CD4-positive, alpha-beta T cell (primary cell): ENCODE measurements at regions of chr4 and their contacts with region 1.

Region 1: GRCh38 chr4:98995183-98996055 is at the start of gene METAP1:
- DNase-seq: peak; percentile 92 to 99 (median 96)
- ATAC-seq: peak; percentile 85
- H3K4me3 ChIP-seq: peak within 1 kb of the TSS; percentile 90
- H3K4me3 Mint-ChIP-seq: peak within 1 kb of the TSS; percentile 93
- H3K27ac ChIP-seq: peak within 1 kb of the TSS; percentile 81 to 89
- H3K27ac Mint-ChIP-seq: peak within 1 kb of the TSS; percentile 99
- H3K4me1 ChIP-seq: peaks cover 23% of the 10 kb centered on the region
- H3K4me1 Mint-ChIP-seq: peaks cover 35% of the 10 kb centered on the region
- H3K27me3 ChIP-seq: no peaks in the 10 kb centered on the region
- H3K27me3 Mint-ChIP-seq: no peaks in the 10 kb centered on the region
- CTCF ChIP-seq: peak; percentile 73
- total RNA-seq, gene METAP1: 25.1 to 26.6 TPM

Region 2: GRCh38 chr4:98143001-98143899 is 852.2 kb before region 1 on chr4 and contains the start of gene STPG2:
- CTCF ChIA-PET with region 1: interaction called, 8 read pairs
- POLR2A ChIA-PET with region 1: interaction called, 18 read pairs
- intact Hi-C with region 1: loop called in 1 of 2 experiments (anchors 5 kb)
- DNase-seq: peak; percentile 85 to 97 (median 94)
- ATAC-seq: peak; percentile 98
- H3K4me3 ChIP-seq: peak within 1 kb of the TSS; percentile 88
- H3K4me3 Mint-ChIP-seq: peak within 1 kb of the TSS; percentile 90
- H3K27ac ChIP-seq: peak within 1 kb of the TSS; percentile 75 to 96
- H3K27ac Mint-ChIP-seq: peak within 1 kb of the TSS; percentile 93
- H3K4me1 ChIP-seq: peaks cover 17% of the 10 kb centered on the region
- H3K4me1 Mint-ChIP-seq: peaks cover 21% of the 10 kb centered on the region
- H3K27me3 ChIP-seq: no peaks in the 10 kb centered on the region
- H3K27me3 Mint-ChIP-seq: no peaks in the 10 kb centered on the region
- CTCF ChIP-seq: peak; percentile 73
- total RNA-seq, gene STPG2: 0.22 to 0.28 TPM

Region 3: GRCh38 chr4:98658287-98659105 is 336.9 kb before region 1 on chr4 and contains the start of gene TSPAN5:
- CTCF ChIA-PET with region 1: interaction called, 8 read pairs
- POLR2A ChIA-PET with region 1: interaction called, 8 read pairs
- intact Hi-C with region 1: loop called (anchors 2 to 5 kb)
- DNase-seq: peak; percentile 56 to 93 (median 84)
- ATAC-seq: peak; percentile 67
- H3K4me3 ChIP-seq: peak within 1 kb of the TSS; percentile 89
- H3K4me3 Mint-ChIP-seq: peak within 1 kb of the TSS; percentile 89
- H3K27ac ChIP-seq: peak within 1 kb of the TSS in 1 of 2 donors; percentile 39
- H3K27ac Mint-ChIP-seq: peak within 1 kb of the TSS; percentile 98
- H3K4me1 ChIP-seq: peaks cover 50% of the 10 kb centered on the region
- H3K4me1 Mint-ChIP-seq: peaks cover 87% of the 10 kb centered on the region
- H3K27me3 ChIP-seq: no peaks in the 10 kb centered on the region
- H3K27me3 Mint-ChIP-seq: no peaks in the 10 kb centered on the region
- CTCF ChIP-seq: no peak
- total RNA-seq, gene TSPAN5: 1.8 to 2.8 TPM

Region 4: GRCh38 chr4:99024481-99025275 is 29.3 kb after region 1 on chr4:
- CTCF ChIA-PET with region 1: interaction called, 11 read pairs
- POLR2A ChIA-PET with region 1: interaction called, 7 read pairs
- intact Hi-C with region 1: no loop called
- DNase-seq: peak in 3 of 14 experiments; percentile 9 to 16 (median 14)
- ATAC-seq: no peak
- H3K4me3 ChIP-seq: no peak overlapping the region
- H3K4me3 Mint-ChIP-seq: no peak overlapping the region
- H3K27ac ChIP-seq: no peak overlapping the region
- H3K27ac Mint-ChIP-seq: peak overlapping the region; percentile 54
- H3K4me1 ChIP-seq: peaks cover 23% of the 10 kb centered on the region
- H3K4me1 Mint-ChIP-seq: peaks cover 85% of the 10 kb centered on the region
- H3K27me3 ChIP-seq: no peaks in the 10 kb centered on the region
- H3K27me3 Mint-ChIP-seq: no peaks in the 10 kb centered on the region
- CTCF ChIP-seq: no peak

Region 5: GRCh38 chr4:99054428-99054994 is 59.1 kb after region 1 on chr4:
- CTCF ChIA-PET with region 1: interaction called, 140 read pairs
- POLR2A ChIA-PET with region 1: interaction called, 82 read pairs
- intact Hi-C with region 1: loop called (anchors 1 kb)
- DNase-seq: no peak
- ATAC-seq: no peak
- H3K4me3 ChIP-seq: no peak overlapping the region
- H3K4me3 Mint-ChIP-seq: no peak overlapping the region
- H3K27ac ChIP-seq: no peak overlapping the region
- H3K27ac Mint-ChIP-seq: peak overlapping the region; percentile 10
- H3K4me1 ChIP-seq: peaks cover 5% of the 10 kb centered on the region
- H3K4me1 Mint-ChIP-seq: peaks cover 12% of the 10 kb centered on the region
- H3K27me3 ChIP-seq: no peaks in the 10 kb centered on the region
- H3K27me3 Mint-ChIP-seq: no peaks in the 10 kb centered on the region
- CTCF ChIP-seq: no peak

Region 6: GRCh38 chr4:99088481-99089365 is 93.3 kb after region 1 on chr4 and contains the start of gene ADH5:
- CTCF ChIA-PET with region 1: interaction called, 26 read pairs
- POLR2A ChIA-PET with region 1: interaction called, 79 read pairs
- intact Hi-C with region 1: loop called (anchors 1 to 2 kb)
- DNase-seq: peak; percentile 86 to 96 (median 91)
- ATAC-seq: peak; percentile 95
- H3K4me3 ChIP-seq: peak within 1 kb of the TSS; percentile 93
- H3K4me3 Mint-ChIP-seq: peak within 1 kb of the TSS; percentile 95
- H3K27ac ChIP-seq: peak within 1 kb of the TSS; percentile 76 to 82
- H3K27ac Mint-ChIP-seq: peak within 1 kb of the TSS; percentile 93
- H3K4me1 ChIP-seq: peaks cover 25% of the 10 kb centered on the region
- H3K4me1 Mint-ChIP-seq: peaks cover 65% of the 10 kb centered on the region
- H3K27me3 ChIP-seq: no peaks in the 10 kb centered on the region
- H3K27me3 Mint-ChIP-seq: no peaks in the 10 kb centered on the region
- CTCF ChIP-seq: no peak
- total RNA-seq, gene ADH5: 49.1 to 52.0 TPM

Region 7: GRCh38 chr4:99120501-99120900 is 125.1 kb after region 1 on chr4:
- CTCF ChIA-PET with region 1: no interaction called
- POLR2A ChIA-PET with region 1: no interaction called
- intact Hi-C with region 1: no loop called
- DNase-seq: no peak
- ATAC-seq: no peak
- H3K4me3 ChIP-seq: no peak overlapping the region
- H3K4me3 Mint-ChIP-seq: no peak overlapping the region
- H3K27ac ChIP-seq: no peak overlapping the region
- H3K27ac Mint-ChIP-seq: no peak overlapping the region
- H3K4me1 ChIP-seq: no peaks in the 10 kb centered on the region
- H3K4me1 Mint-ChIP-seq: no peaks in the 10 kb centered on the region
- H3K27me3 ChIP-seq: no peaks in the 10 kb centered on the region
- H3K27me3 Mint-ChIP-seq: no peaks in the 10 kb centered on the region
- CTCF ChIP-seq: no peak

Region 8: DNA sequence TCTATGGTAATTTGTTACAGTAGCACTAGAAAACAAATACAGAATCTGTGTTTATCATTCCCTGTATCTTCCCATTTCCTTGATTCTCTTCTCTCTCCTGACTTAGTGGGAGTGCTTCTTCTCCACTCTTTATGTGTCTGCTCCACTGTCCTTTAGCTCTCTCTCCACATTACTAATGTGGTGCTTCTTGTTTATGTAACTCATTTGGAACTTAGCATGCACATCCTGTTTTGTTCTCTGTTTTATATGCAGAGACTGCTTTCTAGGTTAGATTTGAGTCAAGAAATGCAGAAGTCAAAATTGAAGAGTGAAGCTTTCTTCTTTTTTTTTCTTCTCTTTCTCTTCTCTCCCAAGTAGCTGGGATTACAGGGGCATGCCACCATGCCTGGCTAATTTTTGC is 269.5 kb after region 1 on chr4:
- CTCF ChIA-PET with region 1: no interaction called
- POLR2A ChIA-PET with region 1: no interaction called
- intact Hi-C with region 1: no loop called
- DNase-seq: no peak
- ATAC-seq: no peak
- H3K4me3 ChIP-seq: no peak overlapping the region
- H3K4me3 Mint-ChIP-seq: no peak overlapping the region
- H3K27ac ChIP-seq: no peak overlapping the region
- H3K27ac Mint-ChIP-seq: no peak overlapping the region
- H3K4me1 ChIP-seq: no peaks in the 10 kb centered on the region
- H3K4me1 Mint-ChIP-seq: no peaks in the 10 kb centered on the region
- H3K27me3 ChIP-seq: no peaks in the 10 kb centered on the region
- H3K27me3 Mint-ChIP-seq: peaks cover 3% of the 10 kb centered on the region
- CTCF ChIP-seq: no peak

Region 9: GRCh38 chr4:99894161-99894997 is 899.0 kb after region 1 on chr4 and contains the start of gene LAMTOR3:
- CTCF ChIA-PET with region 1: interaction called, 3 read pairs
- POLR2A ChIA-PET with region 1: interaction called, 9 read pairs
- intact Hi-C with region 1: loop called in 1 of 2 experiments (anchors 10 kb)
- DNase-seq: peak; percentile 76 to 97 (median 88)
- ATAC-seq: peak; percentile 98
- H3K4me3 ChIP-seq: peak within 1 kb of the TSS; percentile 61
- H3K4me3 Mint-ChIP-seq: peak within 1 kb of the TSS; percentile 99
- H3K27ac ChIP-seq: peak within 1 kb of the TSS; percentile 71 to 80
- H3K27ac Mint-ChIP-seq: peak within 1 kb of the TSS; percentile 96
- H3K4me1 ChIP-seq: peaks cover 23% of the 10 kb centered on the region
- H3K4me1 Mint-ChIP-seq: peaks cover 53% of the 10 kb centered on the region
- H3K27me3 ChIP-seq: no peaks in the 10 kb centered on the region
- H3K27me3 Mint-ChIP-seq: no peaks in the 10 kb centered on the region
- CTCF ChIP-seq: no peak
- total RNA-seq, gene LAMTOR3: 32.0 to 32.8 TPM